ENCODE measurements at regions of chr12 and their contacts with region 1.

Region 1: DNA sequence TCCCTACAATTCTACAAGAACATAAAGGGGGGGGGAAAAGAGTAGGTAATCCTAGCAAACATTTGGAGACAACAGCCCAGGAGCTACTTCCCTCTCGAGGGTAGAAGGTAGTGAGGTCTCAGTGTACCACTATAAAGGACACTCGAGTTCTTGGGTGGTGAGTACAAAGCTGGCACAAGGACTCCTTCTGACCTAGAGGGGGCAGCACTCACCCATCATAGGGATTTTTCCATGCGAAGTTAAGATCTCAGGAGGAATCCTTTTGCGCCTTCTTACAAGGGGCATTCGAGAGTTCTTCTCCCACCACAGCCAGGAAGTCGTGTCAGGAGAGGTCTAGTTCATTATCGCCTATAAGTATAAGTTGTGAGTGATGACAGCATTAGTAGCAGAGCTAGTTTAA is 200.2 kb upstream of the RBM19 start:
- DNase-seq: no peak
- ATAC-seq: peak; percentile 85

Region 2: DNA sequence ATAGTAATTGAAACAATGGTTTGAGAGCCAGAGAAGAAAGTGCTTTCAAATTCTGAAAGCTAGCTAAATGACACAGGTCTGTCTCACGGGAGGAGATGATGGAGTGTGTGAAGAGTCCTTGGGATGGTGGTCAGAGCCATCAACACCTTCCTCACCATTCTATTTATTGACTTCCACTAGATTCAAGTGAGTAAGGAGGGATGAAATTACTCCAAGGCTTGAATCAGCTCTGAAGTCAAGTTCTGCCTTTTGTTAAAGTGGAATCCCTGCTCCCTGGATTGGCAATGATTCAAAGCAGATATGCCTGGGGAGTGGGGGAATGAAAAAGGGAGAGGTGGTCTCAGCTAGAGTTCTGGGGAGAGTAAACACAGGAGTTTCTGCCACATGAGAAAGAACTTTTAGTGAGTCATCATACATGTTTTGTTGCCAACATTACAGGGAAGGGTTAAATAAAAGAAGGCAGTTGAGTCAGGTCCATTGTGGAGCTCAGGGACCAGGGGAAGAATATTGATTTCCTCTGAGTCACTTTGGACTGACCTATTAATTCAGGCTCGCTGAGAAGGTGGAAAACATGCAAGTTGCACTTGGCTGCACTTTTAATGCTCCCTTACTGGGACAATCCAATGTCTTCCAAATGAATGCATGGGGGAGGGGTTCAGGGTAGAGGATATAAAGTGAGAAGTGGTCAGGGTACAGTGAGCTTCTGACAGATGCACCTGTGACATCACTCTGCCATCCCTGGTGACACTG is 96.9 kb after region 1 on chr12:
- intact Hi-C with region 1: no loop called
- DNase-seq: no peak
- ATAC-seq: no peak

Region 3: DNA sequence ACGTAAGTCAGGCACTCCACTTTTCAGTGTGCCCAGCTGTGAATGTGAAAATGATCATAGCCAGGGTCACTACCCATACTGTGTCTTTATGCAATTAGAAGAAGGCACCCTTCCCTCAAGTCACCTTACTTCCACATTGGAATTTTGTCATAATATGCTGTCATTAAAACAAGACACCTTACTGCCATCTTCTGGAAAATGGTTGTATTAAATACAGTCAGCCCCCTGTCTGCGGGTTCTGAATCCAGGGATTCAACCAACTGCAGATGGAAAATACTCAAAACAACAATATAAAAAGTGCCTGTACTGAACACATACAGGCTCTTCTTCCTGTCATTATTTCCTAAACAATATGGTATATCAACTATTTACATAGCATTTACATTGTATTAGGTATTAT is 309.8 kb after region 1 on chr12:
- intact Hi-C with region 1: loop called (anchors 10 kb)
- DNase-seq: no peak
- ATAC-seq: peak; percentile 68

Region 4: GRCh38 chr12:114508529-114509129 is 342.3 kb after region 1 on chr12:
- intact Hi-C with region 1: loop called (anchors 10 kb)
- DNase-seq: peak; percentile 62
- ATAC-seq: peak; percentile 76